Transverse colon (tissue), 4 donors: ENCODE measurements at regions of chr4 and their contacts with region 1.

Region 1: GRCh38 chr4:80452768-80453167 is 117.2 kb downstream of the CFAP299 start:
- DNase-seq: no peak
- H3K4me3 ChIP-seq: no peak overlapping the region
- H3K27ac ChIP-seq: no peak overlapping the region
- H3K4me1 ChIP-seq: no peaks in the 10 kb centered on the region
- H3K27me3 ChIP-seq: no peaks in the 10 kb centered on the region
- CTCF ChIP-seq: no peak
- EP300 ChIP-seq: no peak
- POLR2A ChIP-seq: no peak

Region 2: GRCh38 chr4:80438016-80438415 is 14.8 kb before region 1 on chr4:
- in situ Hi-C with region 1: no loop called
- intact Hi-C with region 1: loop called (anchors 1 kb)
- DNase-seq: no peak
- H3K4me3 ChIP-seq: no peak overlapping the region
- H3K27ac ChIP-seq: no peak overlapping the region
- H3K4me1 ChIP-seq: no peaks in the 10 kb centered on the region
- H3K27me3 ChIP-seq: no peaks in the 10 kb centered on the region
- CTCF ChIP-seq: no peak
- EP300 ChIP-seq: no peak
- POLR2A ChIP-seq: no peak